ENCODE measurements at regions of chr22 and their contacts with region 1.

Region 1: DNA sequence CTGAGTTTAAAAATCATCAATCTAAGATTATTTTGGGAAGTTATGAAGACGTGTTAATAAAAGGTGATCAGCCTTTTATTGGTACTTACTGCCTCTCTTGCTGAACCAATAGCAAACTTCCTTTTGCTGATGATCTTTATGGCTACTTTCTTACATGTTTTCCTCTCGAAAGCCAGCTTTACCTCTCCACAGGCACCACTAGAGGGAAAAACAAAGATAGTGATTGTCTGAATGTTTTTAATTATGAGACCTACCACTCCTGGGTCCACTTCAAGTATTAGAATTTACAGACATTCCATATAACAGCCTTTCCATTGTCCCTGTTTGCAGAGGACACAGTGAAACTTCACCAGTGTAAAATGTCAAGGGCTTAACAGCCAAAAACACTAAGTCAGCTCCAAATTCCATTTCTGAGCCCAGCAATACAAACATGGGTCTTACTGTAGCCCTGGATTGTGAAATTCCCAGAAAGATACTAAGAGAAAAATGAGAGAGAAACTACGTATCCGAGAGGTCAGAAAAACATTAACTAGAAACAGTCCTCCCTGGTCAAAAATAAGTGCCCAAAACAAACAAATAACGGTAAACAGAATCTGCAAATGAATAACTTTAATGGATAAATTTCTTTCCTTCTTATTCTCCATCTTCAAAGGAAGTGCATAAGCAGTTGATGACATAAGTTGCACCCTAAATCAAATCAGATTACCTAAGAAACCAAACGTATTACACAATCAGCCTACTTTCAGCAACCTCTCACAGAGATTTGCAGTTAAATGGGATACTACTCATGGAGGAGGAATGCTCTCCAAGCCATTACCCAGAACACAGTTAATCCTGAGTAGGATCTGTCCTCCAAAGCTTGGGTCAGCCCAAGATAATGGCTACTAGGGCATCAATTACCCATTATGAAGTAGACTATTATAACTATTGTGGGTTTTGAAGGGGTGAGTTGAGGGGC is 29.5 kb downstream of the CHEK2 start:
- DNase-seq: peak; percentile 97
- ATAC-seq: peak; percentile 81
- H3K4me3 ChIP-seq: peak overlapping the region; percentile 12; the same call in 1 of the 2 replicates
- H3K27ac ChIP-seq: peak overlapping the region; percentile 73
- H3K4me1 ChIP-seq: peaks cover 12% of the 10 kb centered on the region
- H3K27me3 ChIP-seq: no peaks in the 10 kb centered on the region
- CTCF ChIP-seq: 0 out of 2 replicates have a peak, but pooled peaks have one; percentile 4
- POLR2A ChIP-seq: no peak
- RAD21 ChIP-seq: no peak

Region 2: DNA sequence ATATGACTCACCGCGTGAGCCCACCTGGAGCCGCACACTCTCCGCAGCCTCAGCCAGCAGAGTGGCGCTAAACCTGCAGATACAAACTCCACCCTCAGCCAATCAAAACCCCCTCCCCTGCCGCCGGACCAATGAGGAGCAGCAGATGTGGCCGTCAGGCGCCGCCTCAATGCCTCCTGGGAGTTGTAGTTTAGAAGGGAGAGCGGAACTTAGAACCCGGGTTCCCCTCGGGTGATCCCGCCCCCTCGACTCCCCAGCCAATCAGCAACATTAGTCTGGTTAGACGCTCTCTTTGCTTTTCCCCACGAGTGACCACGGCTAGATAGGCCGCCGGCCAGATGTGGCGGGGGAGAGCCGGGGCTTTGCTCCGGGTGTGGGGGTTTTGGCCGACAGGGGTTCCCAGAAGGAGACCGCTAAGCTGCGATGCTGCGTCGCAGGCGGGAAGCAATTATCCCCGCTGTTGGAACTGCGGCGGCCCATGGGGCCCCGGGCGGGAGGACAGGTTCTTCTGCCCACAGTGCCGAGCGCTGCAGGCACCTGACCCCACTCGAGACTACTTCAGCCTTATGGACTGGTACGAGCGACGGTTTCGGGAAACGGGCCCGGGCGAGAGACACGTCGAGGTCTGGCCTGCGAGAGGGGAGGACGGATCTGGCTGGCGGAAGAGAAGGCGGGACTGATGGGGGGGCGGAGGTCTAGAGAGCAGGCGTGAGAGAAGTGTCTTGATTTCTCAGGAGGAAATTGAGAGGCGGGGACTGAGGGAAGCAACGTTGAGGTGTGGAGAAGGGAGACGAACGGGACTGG is 29.9 kb after region 1 on chr22 and contains the starts of genes CHEK2 and HSCB:
- CTCF ChIA-PET with region 1: no interaction called
- POLR2A ChIA-PET with region 1: no interaction called
- dilution Hi-C with region 1: no loop called
- in situ Hi-C with region 1: no loop called
- intact Hi-C with region 1: loop called (anchors 1 kb)
- DNase-seq: peak; percentile 99
- ATAC-seq: peak; percentile 94
- H3K4me3 ChIP-seq: peak within 1 kb of the TSS; percentile 73
- H3K27ac ChIP-seq: peak within 1 kb of the TSS; percentile 97
- H3K4me1 ChIP-seq: peaks cover 2% of the 10 kb centered on the region; the same call in 1 of the 2 replicates
- H3K27me3 ChIP-seq: no peaks in the 10 kb centered on the region
- CTCF ChIP-seq: no peak
- POLR2A ChIP-seq: peak; percentile 81
- RAD21 ChIP-seq: no peak
- total RNA-seq, gene CHEK2: 9.9 and 11.4 TPM in 2 replicates
- total RNA-seq, gene HSCB: 5.4 and 9.4 TPM in 2 replicates

Region 3: DNA sequence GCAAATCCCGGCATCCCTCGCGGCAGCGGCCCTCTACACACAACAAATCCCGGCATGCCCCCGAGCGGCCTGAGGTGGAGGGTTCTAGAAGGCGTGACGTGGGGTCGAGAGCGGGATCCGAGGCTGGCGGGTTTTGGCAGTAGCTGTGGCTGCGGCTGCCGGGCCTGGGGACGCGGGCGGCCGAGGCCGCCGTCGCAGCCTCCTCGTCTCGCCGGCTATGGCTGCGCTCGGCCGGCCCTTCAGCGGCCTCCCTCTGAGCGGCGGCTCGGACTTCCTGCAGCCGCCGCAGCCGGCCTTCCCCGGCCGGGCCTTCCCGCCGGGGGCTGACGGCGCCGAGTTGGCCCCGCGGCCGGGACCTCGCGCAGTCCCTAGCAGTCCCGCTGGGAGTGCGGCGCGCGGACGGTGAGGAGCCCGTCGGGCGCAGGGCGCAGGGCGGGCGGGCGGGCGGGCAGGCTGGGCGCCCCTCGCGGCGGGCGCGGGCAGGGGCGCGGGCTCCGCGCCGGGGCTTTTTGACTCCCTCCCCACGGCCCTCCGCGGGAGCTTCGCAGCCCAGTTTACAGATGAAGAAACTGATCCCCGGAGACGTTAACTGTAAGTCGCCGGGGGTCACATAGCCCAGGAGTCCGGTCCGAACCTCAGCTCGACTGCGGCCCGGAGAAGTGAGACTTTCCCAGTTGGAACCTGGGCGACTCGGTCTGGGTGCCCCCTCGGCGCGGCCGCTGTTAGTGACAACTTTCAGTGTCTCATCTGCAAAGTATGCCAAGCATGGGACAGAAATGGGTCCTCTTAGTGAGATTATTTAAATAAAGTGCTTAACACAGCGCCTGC is 60.7 kb after region 1 on chr22 and contains the start of gene CCDC117:
- CTCF ChIA-PET with region 1: no interaction called
- POLR2A ChIA-PET with region 1: no interaction called
- dilution Hi-C with region 1: no loop called
- in situ Hi-C with region 1: no loop called
- intact Hi-C with region 1: loop called (anchors 5 kb)
- DNase-seq: peak; percentile 95
- ATAC-seq: peak; percentile 95
- H3K4me3 ChIP-seq: peak within 1 kb of the TSS; percentile 61
- H3K27ac ChIP-seq: peak within 1 kb of the TSS; percentile 79
- H3K4me1 ChIP-seq: no peaks in the 10 kb centered on the region
- H3K27me3 ChIP-seq: no peaks in the 10 kb centered on the region
- CTCF ChIP-seq: peak; percentile 45
- POLR2A ChIP-seq: peak; percentile 71; the same call in 1 of the 2 replicates
- RAD21 ChIP-seq: no peak; the same call in 1 of the 2 replicates
- total RNA-seq, gene CCDC117: 7.0 and 15.6 TPM in 2 replicates

Region 4: DNA sequence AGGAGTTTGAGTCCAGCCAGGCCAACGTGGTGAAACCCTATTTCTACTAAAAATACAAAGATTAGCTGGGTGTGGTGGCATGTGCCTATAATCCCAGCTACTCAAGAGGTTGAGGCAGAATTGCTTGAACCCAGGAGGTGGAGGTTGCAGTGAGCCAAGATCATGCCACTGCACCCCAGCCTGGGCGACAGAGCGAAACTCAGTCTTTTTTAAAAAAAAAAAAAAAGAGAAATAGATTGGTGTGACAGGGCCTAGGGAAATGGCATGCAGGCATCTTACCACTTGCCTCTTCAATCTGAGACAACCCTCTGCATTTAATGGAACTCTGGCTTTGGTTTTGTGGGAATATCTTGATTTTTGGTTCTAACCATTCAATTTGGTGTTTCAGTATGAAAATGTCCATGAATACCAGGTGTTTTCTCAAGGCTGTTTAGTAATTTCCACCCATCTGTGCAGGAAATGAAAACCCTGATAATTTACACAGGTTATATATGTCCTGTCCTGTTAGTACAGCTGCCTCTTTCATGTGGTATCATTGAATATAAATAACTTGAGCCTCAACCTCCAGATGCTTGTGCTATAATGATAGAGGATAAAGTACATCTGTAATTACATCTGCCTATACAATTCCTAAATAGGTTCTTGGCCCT is 79.9 kb after region 1 on chr22:
- CTCF ChIA-PET with region 1: no interaction called
- POLR2A ChIA-PET with region 1: no interaction called
- dilution Hi-C with region 1: no loop called
- in situ Hi-C with region 1: no loop called
- intact Hi-C with region 1: no loop called
- DNase-seq: peak; percentile 31
- ATAC-seq: no peak
- H3K4me3 ChIP-seq: no peak overlapping the region
- H3K27ac ChIP-seq: no peak overlapping the region
- H3K4me1 ChIP-seq: peaks cover 3% of the 10 kb centered on the region; the same call in 1 of the 2 replicates
- H3K27me3 ChIP-seq: no peaks in the 10 kb centered on the region
- CTCF ChIP-seq: no peak
- POLR2A ChIP-seq: no peak
- RAD21 ChIP-seq: no peak